ENCODE measurements at regions of chr11 and their contacts with region 1.

Region 1: GRCh38 chr11:67507864-67508485 is at the start of gene CDK2AP2:
- DNase-seq: peak; percentile 99
- H3K4me3 Mint-ChIP-seq: peak within 1 kb of the TSS; percentile 90
- H3K27ac Mint-ChIP-seq: peak within 1 kb of the TSS; percentile 98
- H3K4me1 Mint-ChIP-seq: peaks cover 30% of the 10 kb centered on the region
- H3K27me3 Mint-ChIP-seq: no peaks in the 10 kb centered on the region
- total RNA-seq, gene CDK2AP2: 82.7 to 84.7 TPM

Region 2: GRCh38 chr11:67420646-67421420 is 87.1 kb before region 1 on chr11:
- CTCF ChIA-PET with region 1: no interaction called
- POLR2A ChIA-PET with region 1: no interaction called
- intact Hi-C with region 1: loop called (anchors 1 kb)
- DNase-seq: peak; percentile 98
- H3K4me3 Mint-ChIP-seq: peak overlapping the region; percentile 74
- H3K27ac Mint-ChIP-seq: peak overlapping the region; percentile 69
- H3K4me1 Mint-ChIP-seq: peaks cover 41% of the 10 kb centered on the region
- H3K27me3 Mint-ChIP-seq: no peaks in the 10 kb centered on the region

Region 3: GRCh38 chr11:67468835-67469811 is 38.9 kb before region 1 on chr11 and contains the start of gene TMEM134:
- CTCF ChIA-PET with region 1: interaction called, 10 read pairs
- POLR2A ChIA-PET with region 1: interaction called, 3 read pairs
- intact Hi-C with region 1: loop called (anchors 1 kb)
- DNase-seq: peak; percentile 95
- H3K4me3 Mint-ChIP-seq: peak within 1 kb of the TSS; percentile 90
- H3K27ac Mint-ChIP-seq: peak within 1 kb of the TSS; percentile 90
- H3K4me1 Mint-ChIP-seq: peaks cover 30% of the 10 kb centered on the region
- H3K27me3 Mint-ChIP-seq: no peaks in the 10 kb centered on the region
- total RNA-seq, gene TMEM134: 68.2 to 75.2 TPM

Region 4: DNA sequence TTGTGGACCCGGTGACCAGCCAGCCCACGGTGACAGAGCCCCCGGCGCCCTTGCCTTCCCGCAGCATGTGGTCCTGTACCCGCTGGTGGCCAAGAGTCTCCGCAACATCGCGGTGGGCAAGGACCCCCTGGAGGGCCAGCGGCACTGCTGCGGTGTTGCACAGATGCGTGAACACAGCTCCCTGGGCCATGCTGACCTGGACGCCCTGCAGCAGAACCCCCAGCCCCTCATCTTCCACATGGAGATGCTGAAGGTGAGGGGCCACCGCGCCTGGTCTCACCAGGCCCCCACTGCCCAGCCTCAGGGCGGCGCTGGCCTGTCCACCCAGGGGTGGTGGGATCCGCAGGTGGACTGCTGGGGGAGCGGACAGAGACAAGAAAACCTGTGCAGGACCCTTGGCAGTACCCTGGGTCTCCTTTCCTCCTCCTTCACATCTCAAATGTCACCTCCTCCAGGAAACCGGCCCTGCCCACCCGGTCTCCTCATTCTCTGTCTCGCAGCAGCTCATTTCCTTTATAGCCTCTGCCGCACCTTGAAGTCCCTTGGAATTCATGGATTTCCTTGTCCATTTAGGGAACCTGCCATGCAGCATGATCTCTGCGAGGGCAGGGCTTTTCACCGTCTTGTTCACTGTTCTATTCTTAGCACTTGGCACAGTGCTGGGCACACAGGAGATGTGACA is 18.6 kb before region 1 on chr11:
- CTCF ChIA-PET with region 1: interaction called, 10 read pairs
- POLR2A ChIA-PET with region 1: interaction called, 21 read pairs
- intact Hi-C with region 1: loop called (anchors 1 kb)
- DNase-seq: no peak
- H3K4me3 Mint-ChIP-seq: peak overlapping the region; percentile 34
- H3K27ac Mint-ChIP-seq: peak overlapping the region; percentile 99
- H3K4me1 Mint-ChIP-seq: peaks cover 58% of the 10 kb centered on the region
- H3K27me3 Mint-ChIP-seq: no peaks in the 10 kb centered on the region

Region 5: DNA sequence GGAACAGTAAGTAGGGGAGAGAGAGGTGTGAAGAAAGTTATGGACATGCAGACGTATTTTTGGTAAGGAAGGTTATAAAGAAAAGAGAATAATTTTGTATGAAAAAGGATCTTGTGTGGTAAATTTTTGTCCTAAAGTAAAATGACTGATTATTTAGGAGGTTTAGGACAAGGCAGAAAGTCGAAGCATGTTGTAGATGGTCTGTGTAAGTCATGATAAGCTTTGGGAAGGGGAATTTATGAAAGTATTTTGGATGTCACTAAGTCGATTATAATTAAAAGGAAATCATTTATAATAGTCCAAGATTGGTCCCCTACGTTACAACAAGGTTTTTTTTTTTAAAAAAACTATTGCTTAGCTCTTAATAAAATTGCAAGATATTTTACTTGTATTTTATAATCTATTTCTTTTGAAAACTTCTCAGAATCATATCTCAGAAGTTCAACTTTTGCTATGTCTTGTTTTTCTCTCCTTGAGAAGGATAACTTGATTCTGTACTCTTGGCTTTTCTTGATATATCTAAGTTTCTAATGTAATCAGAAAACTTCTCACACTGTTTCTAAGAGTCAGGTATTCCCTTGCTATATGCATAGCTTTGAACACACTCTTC is 26.2 kb after region 1 on chr11:
- CTCF ChIA-PET with region 1: no interaction called
- POLR2A ChIA-PET with region 1: no interaction called
- intact Hi-C with region 1: no loop called
- DNase-seq: no peak
- H3K4me3 Mint-ChIP-seq: no peak overlapping the region
- H3K27ac Mint-ChIP-seq: no peak overlapping the region
- H3K4me1 Mint-ChIP-seq: no peaks in the 10 kb centered on the region
- H3K27me3 Mint-ChIP-seq: no peaks in the 10 kb centered on the region

Measured in activated CD4-positive, alpha-beta memory T cell treated with anti-CD3 and anti-CD28 coated beads for 36 hours (primary cell).